Esophagus muscularis mucosa (tissue), 4 donors: ENCODE measurements at regions of chr9 and their contacts with region 1.

Region 1: DNA sequence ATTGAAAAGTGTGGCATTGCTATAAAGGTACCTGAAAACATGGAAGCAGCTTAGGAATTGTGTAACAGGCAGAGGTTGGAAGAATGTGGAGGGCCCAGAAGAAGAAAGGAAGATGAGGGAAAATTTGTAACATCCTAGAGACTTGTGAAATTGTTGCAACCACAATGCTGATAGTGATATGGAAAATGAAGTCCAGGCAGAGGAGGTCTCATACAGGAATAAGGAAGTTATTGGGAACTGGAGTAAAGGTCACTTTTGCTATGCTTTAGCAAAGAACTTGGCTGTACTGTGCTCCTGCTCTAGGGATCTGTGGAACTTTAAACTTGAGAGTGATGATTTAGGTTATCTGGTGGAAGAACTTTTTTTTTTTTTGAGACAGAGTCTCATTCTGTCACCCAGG is 43.5 kb downstream of the PTPDC1 start:
- DNase-seq: no peak
- H3K4me3 ChIP-seq: no peak overlapping the region
- H3K27ac ChIP-seq: no peak overlapping the region
- H3K4me1 ChIP-seq: no peaks in the 10 kb centered on the region
- H3K27me3 ChIP-seq: no peaks in the 10 kb centered on the region
- CTCF ChIP-seq: no peak
- EP300 ChIP-seq: no peak
- POLR2A ChIP-seq: no peak

Region 2: GRCh38 chr9:94065535-94065961 is 62.3 kb before region 1 on chr9:
- intact Hi-C with region 1: loop called (anchors 5 kb)
- DNase-seq: no peak
- H3K4me3 ChIP-seq: no peak overlapping the region
- H3K27ac ChIP-seq: peak overlapping the region; percentile 32 to 41 (median 36)
- H3K4me1 ChIP-seq: peaks cover 3 to 14% (median 12%) of the 10 kb centered on the region in 4 donors
- H3K27me3 ChIP-seq: no peaks in the 10 kb centered on the region
- CTCF ChIP-seq: peak; percentile 84 to 93 (median 85)
- EP300 ChIP-seq: no peak
- POLR2A ChIP-seq: no peak

Region 3: DNA sequence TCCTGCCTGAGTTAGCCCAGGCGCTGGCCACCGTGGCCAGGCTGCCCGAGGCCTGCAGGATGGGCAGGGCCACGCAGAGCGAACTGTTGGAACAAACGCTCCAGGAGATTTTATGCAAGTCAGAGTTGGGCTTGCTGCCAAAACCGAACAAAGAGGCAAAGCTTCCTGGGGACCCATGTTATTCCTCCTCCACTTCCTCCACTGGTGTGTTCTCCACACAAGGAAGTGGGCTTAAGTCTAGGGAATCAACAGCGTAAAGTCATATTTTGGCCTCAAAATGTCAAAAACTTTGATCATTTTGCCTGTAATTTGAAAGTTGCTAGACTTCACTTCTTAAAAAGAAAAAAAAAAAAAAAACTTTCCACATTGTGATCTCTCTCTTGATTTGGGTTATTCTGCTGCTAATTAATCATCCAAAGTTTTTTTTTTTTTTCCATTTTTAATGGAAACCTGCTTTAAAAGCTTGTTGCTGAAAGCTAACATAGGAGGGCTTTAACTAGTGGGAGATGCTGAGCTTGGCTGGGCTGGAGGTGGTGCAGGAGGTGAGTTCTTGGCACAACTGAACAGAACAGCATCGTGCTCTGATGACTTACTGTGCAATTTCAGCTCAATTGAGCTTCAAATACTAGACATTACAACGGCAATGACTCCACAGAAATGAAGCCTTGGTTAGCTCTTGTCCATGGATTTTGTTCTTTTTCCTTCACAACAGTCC is 29.4 kb after region 1 on chr9:
- intact Hi-C with region 1: no loop called
- DNase-seq: peak; percentile 34
- H3K4me3 ChIP-seq: no peak overlapping the region
- H3K27ac ChIP-seq: peak overlapping the region; percentile 53 to 78 (median 64)
- H3K4me1 ChIP-seq: peaks cover 20 to 32% (median 22%) of the 10 kb centered on the region in 4 donors
- H3K27me3 ChIP-seq: no peaks in the 10 kb centered on the region
- CTCF ChIP-seq: no peak
- EP300 ChIP-seq: no peak
- POLR2A ChIP-seq: no peak

Region 4: DNA sequence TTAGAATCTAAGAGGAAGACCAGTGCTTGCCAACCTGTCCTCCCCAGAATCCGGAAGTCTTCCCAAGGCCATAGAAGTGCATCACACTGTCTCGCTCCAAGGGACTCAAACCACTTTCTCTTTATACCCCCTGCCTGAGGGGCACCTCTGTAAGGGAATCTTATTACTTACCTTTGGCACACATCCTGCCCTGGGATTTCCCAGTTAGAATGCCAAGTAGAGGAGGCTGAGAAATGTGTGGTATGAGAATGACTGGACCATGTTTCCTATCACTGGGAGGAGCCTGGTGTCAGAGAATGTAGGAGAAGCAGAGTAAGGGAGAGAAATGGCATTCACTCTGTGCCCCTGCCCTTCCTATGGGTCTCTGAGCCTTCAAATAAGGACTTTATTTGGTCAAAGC is 684.5 kb after region 1 on chr9:
- intact Hi-C with region 1: no loop called
- DNase-seq: no peak
- H3K4me3 ChIP-seq: no peak overlapping the region
- H3K27ac ChIP-seq: no peak overlapping the region
- H3K4me1 ChIP-seq: peaks cover 15 to 30% (median 28%) of the 10 kb centered on the region in 4 donors
- H3K27me3 ChIP-seq: no peaks in the 10 kb centered on the region
- CTCF ChIP-seq: no peak
- EP300 ChIP-seq: no peak
- POLR2A ChIP-seq: no peak